Activated CD4-positive, alpha-beta T cell treated with anti-CD3 and anti-CD28 coated beads for 36 hours (primary cell): ENCODE measurements at regions of chr11 and their contacts with region 1.

Region 1: GRCh38 chr11:20415432-20415831 is 27.9 kb downstream of the PRMT3 start:
- DNase-seq: no peak
- ATAC-seq: peak; percentile 33
- H3K4me3 Mint-ChIP-seq: no peak overlapping the region
- H3K27ac Mint-ChIP-seq: no peak overlapping the region
- H3K4me1 Mint-ChIP-seq: peaks cover 22% of the 10 kb centered on the region
- H3K27me3 Mint-ChIP-seq: no peaks in the 10 kb centered on the region

Region 2: DNA sequence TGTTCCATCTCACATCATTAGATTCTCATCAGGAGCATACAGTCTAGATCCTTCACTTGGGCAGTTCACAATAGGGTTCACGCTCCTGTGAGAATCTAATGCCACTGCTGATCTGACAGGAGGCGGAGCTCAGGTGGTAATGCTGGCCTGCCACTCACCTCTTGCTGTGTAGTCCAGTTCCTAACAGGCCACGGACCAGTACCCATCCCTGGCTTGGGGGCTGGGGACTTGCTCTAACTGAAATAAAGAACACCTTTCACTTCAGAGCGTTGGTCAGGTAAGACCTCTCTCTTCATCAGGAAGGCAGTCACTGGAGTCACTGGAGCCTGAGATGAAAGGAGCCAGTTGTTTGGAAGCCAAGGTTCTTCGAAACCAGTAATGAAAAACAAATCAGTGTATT is 13.8 kb after region 1 on chr11:
- CTCF ChIA-PET with region 1: interaction called, 3 read pairs
- POLR2A ChIA-PET with region 1: no interaction called
- intact Hi-C with region 1: loop called in 1 of 2 experiments (anchors 2 kb)
- DNase-seq: no peak
- ATAC-seq: no peak
- H3K4me3 Mint-ChIP-seq: no peak overlapping the region
- H3K27ac Mint-ChIP-seq: no peak overlapping the region
- H3K4me1 Mint-ChIP-seq: no peaks in the 10 kb centered on the region
- H3K27me3 Mint-ChIP-seq: no peaks in the 10 kb centered on the region